Activated naive CD4-positive, alpha-beta T cell treated with anti-CD3 and anti-CD28 coated beads for 36 hours (primary cell): ENCODE measurements at regions of chr13 and their contacts with region 1.

Region 1: DNA sequence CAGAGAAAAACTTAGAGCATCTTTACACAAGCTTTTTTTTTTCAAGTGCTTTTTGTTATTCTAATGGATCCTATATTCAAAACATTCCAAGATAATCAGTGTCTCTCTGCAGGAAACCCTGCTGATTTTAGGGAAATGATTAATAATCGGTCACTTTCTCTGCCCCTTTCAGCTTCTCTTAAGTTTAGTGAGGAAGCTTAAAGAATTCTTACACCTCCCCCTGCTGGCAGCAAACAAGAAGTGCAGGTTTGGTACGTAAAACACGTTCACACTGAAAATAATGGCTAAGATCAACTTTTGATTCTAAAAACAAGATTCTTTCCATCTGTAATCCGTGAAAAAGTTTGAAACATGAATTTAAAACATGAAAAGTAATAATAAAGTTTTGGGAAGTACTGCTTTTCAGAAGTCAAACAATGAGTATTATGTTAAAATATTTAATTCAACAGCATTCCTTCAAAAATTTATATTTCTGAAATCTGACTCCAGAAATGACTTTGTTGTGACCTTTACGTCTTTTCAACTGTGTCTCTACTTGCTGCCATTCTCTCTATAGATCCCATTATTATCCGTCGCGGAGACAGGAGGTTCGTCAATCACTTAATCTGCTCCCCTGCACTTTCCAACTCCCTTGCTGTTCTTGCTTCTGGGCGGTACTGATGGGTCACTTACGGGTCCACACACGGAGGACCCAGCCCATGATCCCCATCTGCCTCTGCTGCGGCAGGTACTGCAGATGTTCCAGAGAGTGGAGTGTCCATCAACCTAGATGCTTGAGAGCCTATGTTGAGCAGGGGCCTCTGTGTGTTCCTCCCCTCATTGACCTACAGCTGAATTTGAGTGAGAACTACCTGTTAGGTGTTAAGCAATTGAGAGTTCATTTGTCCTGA is 203.1 kb upstream of the EDNRB start:
- DNase-seq: peak; percentile 55
- H3K4me3 Mint-ChIP-seq: no peak overlapping the region
- H3K27ac Mint-ChIP-seq: no peak overlapping the region
- H3K4me1 Mint-ChIP-seq: peaks cover 4% of the 10 kb centered on the region
- H3K27me3 Mint-ChIP-seq: peaks cover 14% of the 10 kb centered on the region

Region 2: DNA sequence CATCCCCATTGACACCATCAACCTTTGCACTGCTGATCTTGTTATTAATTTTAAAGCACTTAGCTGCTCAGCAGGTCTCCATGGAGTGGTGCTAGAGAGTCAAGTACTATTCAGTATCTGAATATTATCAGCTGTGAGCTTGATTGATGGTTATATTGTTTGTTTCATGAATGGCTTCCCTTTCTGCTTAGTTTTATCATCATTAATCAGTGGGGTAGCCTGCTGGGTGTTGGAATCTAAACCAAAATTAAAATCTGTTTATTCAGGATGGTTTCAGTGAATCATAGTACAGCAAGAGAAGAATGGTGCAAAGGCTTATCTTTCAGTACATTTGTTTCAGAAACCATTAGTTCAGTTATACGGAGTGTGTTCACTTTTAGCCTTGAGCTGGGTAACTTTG is 628.7 kb before region 1 on chr13:
- CTCF ChIA-PET with region 1: no interaction called
- intact Hi-C with region 1: loop called (anchors 10 kb)
- DNase-seq: peak; percentile 25
- H3K4me3 Mint-ChIP-seq: no peak overlapping the region
- H3K27ac Mint-ChIP-seq: no peak overlapping the region
- H3K4me1 Mint-ChIP-seq: no peaks in the 10 kb centered on the region
- H3K27me3 Mint-ChIP-seq: peaks cover 2% of the 10 kb centered on the region

Region 3: DNA sequence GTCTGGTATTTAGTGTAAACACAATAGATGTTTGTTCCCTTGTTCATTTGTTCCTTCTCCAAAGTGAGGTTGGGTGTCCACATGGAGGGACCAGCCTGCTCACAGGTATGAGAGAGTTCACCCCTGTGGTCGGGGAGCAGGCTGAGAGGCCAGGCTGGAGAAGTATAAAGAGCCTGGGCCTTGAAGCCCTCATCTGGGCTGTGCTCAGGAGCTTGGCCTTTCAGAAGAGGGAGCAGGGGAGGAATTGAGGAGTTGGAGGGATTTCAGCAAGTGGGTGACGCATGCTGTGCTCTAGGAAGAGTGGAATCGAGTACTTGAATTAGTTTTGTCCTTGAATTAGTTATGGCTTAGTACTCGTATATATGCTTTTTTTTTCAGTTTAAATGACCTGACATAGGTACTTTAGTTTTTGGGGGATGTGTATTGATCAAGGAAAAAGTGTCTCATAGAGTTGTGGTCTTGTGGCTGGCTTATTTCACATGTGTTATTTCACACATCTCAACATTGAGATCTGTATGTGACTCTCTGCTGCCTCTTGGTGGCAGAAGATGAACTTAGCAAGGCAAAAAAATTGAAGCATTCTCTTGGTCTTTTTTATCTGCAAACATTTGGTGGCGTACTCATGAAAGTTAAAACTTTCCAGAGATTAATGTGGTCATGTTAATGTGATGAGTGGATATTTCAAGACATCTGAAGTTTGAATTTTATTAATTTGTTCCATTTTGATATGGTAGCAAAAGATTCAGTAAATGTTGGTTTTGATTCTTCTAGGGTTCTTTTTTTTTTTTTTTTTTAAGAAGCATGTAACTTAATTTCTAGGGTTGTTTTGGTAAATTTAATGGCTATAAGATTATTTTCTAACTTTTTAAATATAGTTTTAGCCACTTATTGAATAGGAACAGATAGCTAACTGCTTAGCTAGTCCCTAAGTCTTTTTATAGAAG is 369.9 kb before region 1 on chr13:
- CTCF ChIA-PET with region 1: interaction called, 3 read pairs
- intact Hi-C with region 1: loop called (anchors 1 kb)
- DNase-seq: peak; percentile 73
- H3K4me3 Mint-ChIP-seq: no peak overlapping the region
- H3K27ac Mint-ChIP-seq: no peak overlapping the region
- H3K4me1 Mint-ChIP-seq: peaks cover 18% of the 10 kb centered on the region
- H3K27me3 Mint-ChIP-seq: no peaks in the 10 kb centered on the region

Region 4: DNA sequence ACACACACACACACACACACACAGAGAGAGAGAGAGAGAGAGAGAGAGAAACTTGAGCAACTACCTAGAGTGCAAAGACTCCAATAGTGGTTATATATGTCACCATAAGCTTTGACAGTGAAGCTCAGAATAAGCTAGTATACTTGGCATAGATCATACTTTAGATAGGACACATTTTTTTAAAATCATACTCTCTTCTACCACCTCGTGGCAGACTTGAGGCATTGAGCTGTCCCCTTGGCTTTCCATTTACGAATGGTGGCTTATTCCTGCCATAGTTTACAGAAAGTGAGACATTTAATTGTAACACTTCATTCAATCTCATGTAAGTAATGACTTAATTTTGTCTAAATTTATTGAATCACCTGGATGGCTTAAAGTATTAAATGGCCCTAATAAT is 311.3 kb before region 1 on chr13:
- CTCF ChIA-PET with region 1: interaction called, 4 read pairs
- intact Hi-C with region 1: loop called (anchors 1 kb)
- DNase-seq: peak; percentile 11
- H3K4me3 Mint-ChIP-seq: no peak overlapping the region
- H3K27ac Mint-ChIP-seq: no peak overlapping the region
- H3K4me1 Mint-ChIP-seq: peaks cover 4% of the 10 kb centered on the region
- H3K27me3 Mint-ChIP-seq: peaks cover 9% of the 10 kb centered on the region

Region 5: GRCh38 chr13:78131811-78132210 is 10.1 kb after region 1 on chr13:
- CTCF ChIA-PET with region 1: interaction called, 15 read pairs
- intact Hi-C with region 1: no loop called
- DNase-seq: no peak
- H3K4me3 Mint-ChIP-seq: no peak overlapping the region
- H3K27ac Mint-ChIP-seq: no peak overlapping the region
- H3K4me1 Mint-ChIP-seq: no peaks in the 10 kb centered on the region
- H3K27me3 Mint-ChIP-seq: peaks cover 8% of the 10 kb centered on the region